Transverse colon (tissue), 4 donors: ENCODE measurements at regions of chr14 and their contacts with region 1.

Region 1: DNA sequence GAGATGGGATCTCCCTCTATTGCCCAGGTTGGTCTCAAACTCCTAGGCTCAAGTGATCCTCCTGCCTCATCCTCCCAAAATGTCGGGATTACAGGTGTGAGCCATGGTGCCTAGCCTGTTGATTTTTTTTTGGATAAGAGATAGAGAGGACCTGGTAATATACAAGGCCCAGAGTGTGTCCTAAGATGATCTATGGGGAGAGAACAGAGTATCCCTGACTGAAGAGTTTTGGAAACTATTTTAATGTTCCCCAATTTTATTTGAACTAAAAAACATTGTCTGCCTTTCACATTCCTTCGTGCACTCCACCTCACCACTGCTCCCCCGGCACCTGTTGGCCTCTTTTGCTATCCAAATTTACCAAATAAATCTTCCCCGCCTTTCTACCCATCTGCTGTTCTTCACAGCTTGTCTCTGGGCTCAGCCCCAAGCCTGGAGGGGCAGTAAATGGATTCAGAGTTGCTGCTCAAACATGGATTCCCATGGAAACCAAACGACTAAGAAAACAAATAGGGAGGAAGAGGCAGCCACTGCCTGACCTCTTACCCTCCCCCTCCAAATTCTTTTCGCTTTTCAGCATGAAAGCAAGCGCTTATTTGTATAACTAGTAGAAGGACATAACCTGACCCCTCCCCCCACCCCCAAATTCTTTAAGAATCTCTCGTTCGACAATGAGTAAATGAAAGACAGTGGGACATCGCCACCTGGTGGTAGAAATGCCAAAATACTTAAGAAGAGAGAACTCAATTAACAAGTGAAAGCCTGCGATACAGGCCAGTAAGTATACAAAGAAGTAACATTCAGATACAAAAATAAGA is 22.6 kb downstream of the OR10G3 start:
- DNase-seq: peak; percentile 77
- H3K4me3 ChIP-seq: peak overlapping the region in 2 of 4 donors; percentile 19 to 39
- H3K27ac ChIP-seq: peak overlapping the region; percentile 54 to 79 (median 61)
- H3K4me1 ChIP-seq: peaks cover 0 to 9% (median 5%) of the 10 kb centered on the region in 4 donors
- H3K27me3 ChIP-seq: no peaks in the 10 kb centered on the region
- CTCF ChIP-seq: peak; percentile 70 to 83 (median 74)
- EP300 ChIP-seq: no peak
- POLR2A ChIP-seq: no peak

Region 2: DNA sequence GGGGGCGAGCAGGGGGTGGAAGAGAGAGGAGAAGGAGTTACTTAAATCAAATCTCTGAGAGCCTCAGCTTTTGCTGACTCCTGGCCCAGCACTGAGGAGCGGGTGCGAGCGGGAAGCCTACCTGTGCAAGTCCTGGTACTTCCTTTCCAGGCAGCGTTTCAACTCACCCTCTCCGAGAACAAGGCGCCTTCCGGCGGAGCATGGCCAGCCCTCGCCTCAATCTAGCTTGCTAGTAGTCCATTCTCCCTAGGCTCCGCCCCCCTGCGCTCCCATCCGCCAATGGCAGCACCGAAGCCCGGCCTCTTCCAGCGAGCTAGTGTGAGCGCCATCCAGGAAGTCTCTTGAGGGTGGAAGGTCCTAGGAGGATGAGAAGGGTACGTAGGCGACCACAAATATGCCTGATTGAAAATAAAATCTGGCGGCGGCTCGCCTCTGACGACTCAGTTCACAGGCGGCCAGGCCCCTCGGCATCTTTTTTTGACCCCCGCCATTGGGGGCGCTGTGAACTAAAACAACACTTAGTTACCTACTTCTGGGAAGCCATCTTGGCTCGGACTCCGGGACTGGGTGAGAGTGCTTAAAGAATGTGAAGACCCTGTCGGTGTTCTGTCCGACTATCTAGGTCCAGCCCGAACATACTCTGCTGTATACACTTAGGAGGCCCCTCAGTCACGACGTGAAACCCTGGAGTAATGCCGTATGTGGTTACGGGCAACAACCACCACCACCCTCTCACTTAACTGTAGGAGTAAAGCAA is 101.2 kb before region 1 on chr14 and contains the start of gene CHD8:
- in situ Hi-C with region 1: no loop called
- intact Hi-C with region 1: loop called (anchors 5 kb)
- DNase-seq: peak; percentile 100
- H3K4me3 ChIP-seq: peak within 1 kb of the TSS; percentile 57 to 95 (median 80)
- H3K27ac ChIP-seq: peak within 1 kb of the TSS; percentile 94 to 98 (median 95)
- H3K4me1 ChIP-seq: peaks cover 0 to 37% (median 20%) of the 10 kb centered on the region in 4 donors
- H3K27me3 ChIP-seq: no peaks in the 10 kb centered on the region
- CTCF ChIP-seq: peak; percentile 42 to 73 (median 58)
- EP300 ChIP-seq: no peak
- POLR2A ChIP-seq: peak; percentile 77
- total RNA-seq, gene CHD8: 46.2 to 59.7 (median 50.8) TPM

Region 3: GRCh38 chr14:21643407-21643806 is 86.1 kb after region 1 on chr14:
- in situ Hi-C with region 1: no loop called
- intact Hi-C with region 1: no loop called
- DNase-seq: no peak
- H3K4me3 ChIP-seq: no peak overlapping the region
- H3K27ac ChIP-seq: no peak overlapping the region
- H3K4me1 ChIP-seq: no peaks in the 10 kb centered on the region
- H3K27me3 ChIP-seq: no peaks in the 10 kb centered on the region
- CTCF ChIP-seq: no peak
- EP300 ChIP-seq: no peak
- POLR2A ChIP-seq: no peak